Mammary epithelial cell (primary cell): ENCODE measurements at regions of chr3 and their contacts with region 1.

Region 1: DNA sequence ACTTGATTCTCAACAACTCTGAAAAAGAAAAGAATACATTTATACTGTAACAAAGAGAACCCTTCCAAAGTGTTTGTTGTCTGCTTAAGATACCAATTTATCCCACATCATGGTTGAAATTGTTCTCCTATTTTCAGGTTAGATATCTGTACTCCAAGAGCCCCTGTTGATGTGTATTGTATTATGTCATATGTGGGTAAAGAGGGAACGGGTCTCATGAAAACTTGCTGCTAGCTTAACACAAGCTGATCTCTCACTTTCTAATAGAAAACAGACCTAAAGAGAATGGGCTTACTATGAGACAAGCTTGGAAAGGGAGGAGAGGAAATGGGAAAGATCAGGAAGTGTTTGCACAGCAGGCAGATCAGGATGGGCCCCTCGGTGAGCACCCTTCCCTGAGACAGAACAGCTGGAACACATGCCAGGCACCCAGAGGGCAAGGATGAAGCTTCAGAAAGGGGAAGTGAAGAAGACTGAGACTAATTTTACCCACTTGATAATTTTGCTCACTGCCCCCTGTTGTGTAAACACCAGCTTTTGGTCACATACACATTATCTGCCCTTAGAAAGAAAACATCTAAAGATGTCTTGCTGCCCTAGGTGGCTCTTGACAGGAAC is 747.9 kb upstream of the CCDC54 start:
- DNase-seq: no peak
- H3K4me3 ChIP-seq: no peak overlapping the region
- H3K27ac ChIP-seq: no peak overlapping the region
- H3K4me1 ChIP-seq: peaks cover 3% of the 10 kb centered on the region
- H3K27me3 ChIP-seq: no peaks in the 10 kb centered on the region
- CTCF ChIP-seq: no peak

Region 2: DNA sequence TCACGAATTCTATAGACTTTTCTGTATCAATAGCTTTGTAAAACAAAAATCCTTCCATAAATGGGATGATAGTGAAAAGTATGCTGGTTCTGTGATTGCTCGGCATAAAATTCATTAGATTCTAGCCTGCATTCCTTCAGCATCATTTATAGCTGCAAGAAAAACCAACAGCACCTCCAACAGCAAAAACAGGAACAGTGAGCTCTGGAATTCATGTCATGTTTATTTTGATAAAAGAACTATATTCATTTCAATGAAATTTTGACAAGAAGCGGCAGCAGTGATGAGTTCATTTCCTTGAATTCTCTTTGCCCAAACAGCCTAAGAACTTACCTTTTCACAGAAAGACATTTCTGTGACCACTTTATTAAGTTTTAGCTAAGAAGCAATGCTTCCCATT is 232.7 kb after region 1 on chr3:
- CTCF ChIA-PET with region 1: no interaction called
- dilution Hi-C with region 1: no loop called
- in situ Hi-C with region 1: no loop called
- intact Hi-C with region 1: loop called (anchors 2 kb)
- DNase-seq: no peak
- H3K4me3 ChIP-seq: no peak overlapping the region
- H3K27ac ChIP-seq: no peak overlapping the region
- H3K4me1 ChIP-seq: no peaks in the 10 kb centered on the region
- H3K27me3 ChIP-seq: no peaks in the 10 kb centered on the region
- CTCF ChIP-seq: peak; percentile 11 to 42

Region 3: DNA sequence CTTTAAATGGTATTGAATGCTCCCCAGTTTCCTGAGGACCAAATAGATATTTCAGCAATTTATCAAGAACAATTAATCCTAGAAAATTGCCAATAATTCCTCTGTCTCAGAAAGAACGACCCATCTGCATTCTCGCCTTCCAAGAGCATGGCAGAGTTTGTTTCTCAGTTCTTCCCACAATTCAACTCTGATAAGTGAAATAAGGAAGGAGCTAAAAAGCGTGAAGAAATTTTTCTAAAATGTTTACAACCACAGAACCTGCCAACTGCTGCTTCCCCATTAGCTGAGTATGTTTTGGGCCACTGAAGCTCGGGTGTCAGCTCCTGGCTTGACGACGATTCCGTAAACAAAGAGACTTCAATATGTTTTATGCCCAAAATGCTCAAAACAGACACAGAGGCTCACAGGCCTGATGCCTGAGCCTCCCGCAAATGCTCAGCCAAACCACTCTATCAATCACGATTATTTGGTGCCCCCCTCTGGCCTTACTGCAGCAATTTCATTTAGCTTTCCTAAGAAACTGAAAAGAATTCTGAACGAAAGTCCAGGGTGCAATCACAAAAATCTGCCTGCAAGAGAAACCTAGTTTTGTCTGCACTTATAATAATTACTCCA is 488.7 kb after region 1 on chr3:
- CTCF ChIA-PET with region 1: no interaction called
- dilution Hi-C with region 1: no loop called
- in situ Hi-C with region 1: no loop called
- intact Hi-C with region 1: loop called (anchors 2 kb)
- DNase-seq: peak; percentile 41
- H3K4me3 ChIP-seq: no peak overlapping the region
- H3K27ac ChIP-seq: no peak overlapping the region
- H3K4me1 ChIP-seq: no peaks in the 10 kb centered on the region
- H3K27me3 ChIP-seq: no peaks in the 10 kb centered on the region
- CTCF ChIP-seq: peak; percentile 56